ENCODE measurements at regions of chr9 and their contacts with region 1.

Region 1: DNA sequence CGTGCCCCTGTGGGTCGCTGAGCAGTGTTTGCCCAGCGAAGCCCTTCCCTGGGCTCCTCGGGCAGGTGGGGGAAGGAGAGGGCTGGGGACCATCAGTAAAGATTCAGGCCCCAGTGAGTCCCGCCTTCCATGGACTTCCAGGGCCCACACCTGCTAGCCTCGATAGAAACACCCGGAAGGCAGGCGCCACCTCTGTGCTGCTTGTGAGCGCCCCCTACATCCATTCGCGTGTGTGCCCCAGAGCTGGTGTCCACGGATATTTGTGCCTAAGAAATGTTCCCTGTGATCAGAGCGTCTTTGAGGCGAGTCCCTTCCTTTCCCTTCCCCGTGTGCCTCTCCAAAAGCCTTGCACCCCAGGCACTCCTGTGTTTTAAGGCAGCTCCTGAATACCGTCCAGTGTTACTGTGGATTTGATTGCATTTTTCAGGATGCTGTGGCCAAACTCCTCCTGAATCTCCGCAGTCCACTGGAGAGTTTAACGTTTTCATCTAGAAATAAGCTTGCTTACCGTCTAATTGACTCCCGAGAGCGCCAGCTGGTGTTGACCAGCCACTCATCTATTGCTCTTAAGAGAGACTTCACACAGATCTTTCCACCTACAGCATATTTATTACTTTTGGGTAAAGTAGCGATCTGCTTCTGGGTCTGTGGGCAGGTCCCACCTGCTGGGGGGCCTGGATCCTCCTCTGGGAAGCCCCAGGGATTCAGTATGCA is 101.4 kb downstream of the COL5A1 start:
- DNase-seq: no peak
- ATAC-seq: no peak
- H3K4me3 ChIP-seq: no peak overlapping the region
- H3K4me1 ChIP-seq: no peaks in the 10 kb centered on the region
- CTCF ChIP-seq: no peak

Region 2: DNA sequence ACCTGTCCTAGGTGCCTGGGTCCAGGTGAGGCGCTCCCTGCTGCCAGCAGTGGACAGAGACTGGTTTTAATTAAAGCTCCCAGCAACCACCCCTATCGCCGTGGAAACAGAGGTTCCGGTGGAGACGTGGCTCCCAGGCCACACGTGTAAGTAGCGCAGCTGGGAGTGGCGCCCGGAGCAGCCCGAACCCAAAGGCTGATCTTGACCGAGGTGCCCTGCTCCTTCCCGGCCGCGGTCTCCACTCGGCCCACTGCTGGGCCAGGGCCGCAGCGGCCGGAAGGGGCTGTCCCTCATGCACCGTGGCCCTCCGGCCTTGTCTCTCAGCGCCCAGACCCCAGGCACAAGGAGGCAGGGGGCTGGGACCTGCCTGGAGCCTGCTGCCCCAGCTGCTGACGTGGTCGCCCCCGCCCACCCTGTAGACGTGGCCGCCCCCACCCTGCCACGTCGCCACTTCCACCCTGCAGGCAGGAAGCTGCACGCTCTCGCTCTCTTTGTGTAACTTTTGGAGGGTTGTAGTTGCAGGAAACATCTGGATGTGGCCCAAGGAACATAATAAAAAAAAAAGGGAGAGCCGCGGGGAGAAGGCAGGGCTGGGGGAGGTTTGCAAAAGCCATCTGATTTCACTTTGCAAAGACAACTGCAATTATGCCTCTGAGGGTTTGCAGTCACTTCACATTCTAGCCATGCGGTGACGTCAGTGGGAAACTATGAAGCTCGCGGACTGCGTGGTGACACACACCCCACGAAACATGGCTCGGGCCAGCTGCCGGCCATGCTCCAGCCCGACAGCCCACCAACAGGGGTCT is 286.8 kb before region 1 on chr9:
- intact Hi-C with region 1: loop called in 1 of 2 experiments (anchors 10 kb)
- DNase-seq: peak; percentile 76 to 89 (median 82)
- ATAC-seq: peak; percentile 80
- H3K4me3 ChIP-seq: no peak overlapping the region
- H3K4me1 ChIP-seq: peaks cover 8% of the 10 kb centered on the region
- CTCF ChIP-seq: no peak

Region 3: DNA sequence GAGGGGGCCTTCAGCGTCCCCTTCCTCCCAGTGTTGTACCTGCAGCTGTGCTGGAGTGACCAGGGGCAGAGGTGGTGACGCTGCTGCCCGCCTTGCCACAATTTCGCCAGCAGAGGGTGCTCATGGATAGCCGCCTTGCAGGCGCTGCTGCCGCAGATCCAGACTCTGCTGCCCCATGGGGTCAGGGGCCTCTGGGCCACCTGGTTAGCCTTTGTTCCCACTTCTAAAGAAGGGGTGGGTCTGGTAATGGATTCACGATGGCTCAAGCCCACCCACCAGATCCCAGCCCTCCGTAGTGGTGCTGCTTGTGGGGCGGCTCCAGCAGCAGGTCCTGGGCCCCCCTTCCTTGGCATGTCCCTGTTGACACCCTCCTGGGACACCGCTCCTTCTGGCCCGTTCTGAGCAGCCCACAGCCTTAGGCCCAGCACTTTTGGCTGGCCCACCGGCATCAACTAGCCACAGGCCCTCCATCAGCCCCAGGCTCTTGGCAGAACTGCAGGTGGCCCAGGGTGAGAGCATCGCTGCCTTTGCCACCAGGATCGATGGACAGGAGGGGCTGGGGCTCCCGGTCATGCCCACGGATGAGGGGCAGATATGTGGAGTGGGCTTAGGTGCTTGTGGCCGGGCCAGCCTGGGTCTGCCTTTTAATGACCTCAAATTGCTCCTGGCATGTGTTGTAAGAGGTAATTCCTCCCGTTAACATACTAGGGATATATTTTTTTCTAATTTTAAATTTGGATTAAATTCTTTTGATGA is 44.2 kb before region 1 on chr9:
- intact Hi-C with region 1: loop called in 1 of 2 experiments (anchors 5 kb)
- DNase-seq: peak; percentile 62 to 72 (median 68)
- ATAC-seq: peak; percentile 75
- H3K4me3 ChIP-seq: no peak overlapping the region
- H3K4me1 ChIP-seq: no peaks in the 10 kb centered on the region
- CTCF ChIP-seq: peak; percentile 92